Activated naive CD4-positive, alpha-beta T cell treated with anti-CD3 and anti-CD28 coated beads, Interleukin-2, amount 10 ng/mL, durations not matched to agents 7 days and 5 days (primary cell): ENCODE measurements at regions of chr5 and their contacts with region 1.

Region 1: DNA sequence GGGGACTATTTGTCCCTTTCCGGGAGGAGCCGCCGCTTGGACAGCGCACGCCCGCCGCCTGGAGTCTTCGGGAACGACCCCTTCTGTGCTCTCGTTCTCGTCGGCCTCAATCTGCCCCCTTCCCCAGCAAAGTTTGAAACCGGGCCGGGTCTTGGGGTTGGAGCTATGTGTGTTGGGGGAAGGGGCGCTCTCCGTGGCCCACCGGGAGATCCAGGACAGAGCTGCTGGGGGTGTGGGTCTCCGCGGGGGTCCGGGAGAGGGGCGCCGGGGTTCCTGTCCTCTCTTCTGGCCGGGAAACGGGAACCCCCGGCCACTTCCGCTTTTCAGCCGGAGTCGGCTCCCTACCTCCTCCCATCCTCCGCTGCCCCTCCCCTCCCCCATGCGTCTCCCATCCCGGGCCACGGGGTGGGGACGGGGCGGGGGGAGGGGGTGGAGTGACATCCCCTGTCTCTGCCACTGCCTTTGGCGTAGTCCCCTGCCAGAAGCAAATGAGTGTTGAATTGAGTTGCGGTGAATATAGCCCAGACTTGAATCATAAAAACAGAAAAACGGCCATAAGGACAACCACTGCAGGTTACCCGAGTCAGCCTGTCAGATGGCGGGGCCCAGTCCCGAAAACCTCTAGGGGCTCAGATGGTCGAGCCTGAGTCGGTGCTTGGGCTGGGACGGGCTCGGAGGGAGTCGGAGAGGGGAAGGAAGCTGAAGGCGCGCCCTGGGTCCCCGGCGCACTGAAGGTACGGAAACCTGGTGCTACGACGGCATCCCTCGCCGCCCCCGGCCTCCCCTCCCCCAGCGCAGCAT is 1.1 kb downstream of the CPLX2 start:
- DNase-seq: no peak
- H3K4me3 Mint-ChIP-seq: no peak overlapping the region
- H3K27ac Mint-ChIP-seq: no peak overlapping the region
- H3K4me1 Mint-ChIP-seq: peaks cover 3% of the 10 kb centered on the region
- H3K27me3 Mint-ChIP-seq: peaks cover 79% of the 10 kb centered on the region

Region 2: GRCh38 chr5:175729829-175730277 is 142.6 kb before region 1 on chr5:
- CTCF ChIA-PET with region 1: interaction called, 16 read pairs
- DNase-seq: peak; percentile 95
- H3K4me3 Mint-ChIP-seq: no peak overlapping the region
- H3K27ac Mint-ChIP-seq: no peak overlapping the region
- H3K4me1 Mint-ChIP-seq: peaks cover 9% of the 10 kb centered on the region
- H3K27me3 Mint-ChIP-seq: peaks cover 58% of the 10 kb centered on the region